Natural killer cell (primary cell): ENCODE measurements at regions of chr7 and their contacts with region 1.

Region 1: DNA sequence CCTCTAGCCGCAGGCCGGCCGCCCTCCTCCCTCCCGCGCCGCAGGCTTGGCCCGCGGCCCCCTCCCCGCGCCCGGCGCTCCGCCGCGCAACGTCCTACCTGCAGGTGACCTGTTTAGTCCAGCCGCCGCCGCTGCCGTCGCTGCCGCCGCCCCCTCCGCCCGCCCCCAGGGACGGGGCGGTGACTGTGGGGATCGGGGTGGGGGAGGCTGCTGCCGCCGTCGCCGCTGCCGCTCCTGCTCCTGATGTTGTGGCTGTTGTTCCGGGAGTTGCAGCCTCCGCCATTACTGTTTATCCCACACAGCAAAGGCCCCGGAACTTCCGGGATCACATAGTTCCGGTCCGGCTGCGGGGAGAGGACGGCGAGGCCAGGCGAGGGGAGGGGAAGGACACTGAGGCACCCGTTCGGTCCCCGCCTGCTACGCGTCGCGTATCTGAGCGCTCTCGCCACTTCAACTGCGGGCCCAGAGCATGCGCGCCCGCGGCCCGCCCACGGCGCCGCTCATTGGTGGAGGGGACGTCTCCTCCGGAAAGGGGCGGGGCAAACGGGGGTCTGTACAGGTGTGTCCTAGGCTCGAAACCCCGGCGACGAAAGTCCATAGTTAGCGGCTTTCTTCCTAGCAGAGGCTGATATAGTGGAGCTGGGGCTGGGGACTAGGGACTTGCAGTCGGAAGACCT is at the start of gene MKRN1:
- DNase-seq: peak; percentile 83 to 95
- ATAC-seq: peak; percentile 84 to 93 (median 91)
- H3K4me3 ChIP-seq: peak within 1 kb of the TSS; percentile 86
- H3K4me3 Mint-ChIP-seq: peak within 1 kb of the TSS; percentile 99
- H3K27ac ChIP-seq: peak within 1 kb of the TSS; percentile 75
- H3K27ac Mint-ChIP-seq: peak within 1 kb of the TSS; percentile 93
- H3K4me1 ChIP-seq: peaks cover 26% of the 10 kb centered on the region
- H3K4me1 Mint-ChIP-seq: peaks cover 30 to 34% of the 10 kb centered on the region in 2 donors
- H3K27me3 ChIP-seq: no peaks in the 10 kb centered on the region
- H3K27me3 Mint-ChIP-seq: no peaks in the 10 kb centered on the region
- CTCF ChIP-seq: no peak
- total RNA-seq, gene MKRN1: 119 to 146 (median 136) TPM

Region 2: GRCh38 chr7:140494867-140495266 is 15.7 kb after region 1 on chr7:
- intact Hi-C with region 1: loop called (anchors 1 kb)
- DNase-seq: no peak
- ATAC-seq: no peak
- H3K4me3 ChIP-seq: no peak overlapping the region
- H3K4me3 Mint-ChIP-seq: no peak overlapping the region
- H3K27ac ChIP-seq: no peak overlapping the region
- H3K27ac Mint-ChIP-seq: no peak overlapping the region
- H3K4me1 ChIP-seq: no peaks in the 10 kb centered on the region
- H3K4me1 Mint-ChIP-seq: no peaks in the 10 kb centered on the region
- H3K27me3 ChIP-seq: no peaks in the 10 kb centered on the region
- H3K27me3 Mint-ChIP-seq: no peaks in the 10 kb centered on the region
- CTCF ChIP-seq: no peak

Region 3: DNA sequence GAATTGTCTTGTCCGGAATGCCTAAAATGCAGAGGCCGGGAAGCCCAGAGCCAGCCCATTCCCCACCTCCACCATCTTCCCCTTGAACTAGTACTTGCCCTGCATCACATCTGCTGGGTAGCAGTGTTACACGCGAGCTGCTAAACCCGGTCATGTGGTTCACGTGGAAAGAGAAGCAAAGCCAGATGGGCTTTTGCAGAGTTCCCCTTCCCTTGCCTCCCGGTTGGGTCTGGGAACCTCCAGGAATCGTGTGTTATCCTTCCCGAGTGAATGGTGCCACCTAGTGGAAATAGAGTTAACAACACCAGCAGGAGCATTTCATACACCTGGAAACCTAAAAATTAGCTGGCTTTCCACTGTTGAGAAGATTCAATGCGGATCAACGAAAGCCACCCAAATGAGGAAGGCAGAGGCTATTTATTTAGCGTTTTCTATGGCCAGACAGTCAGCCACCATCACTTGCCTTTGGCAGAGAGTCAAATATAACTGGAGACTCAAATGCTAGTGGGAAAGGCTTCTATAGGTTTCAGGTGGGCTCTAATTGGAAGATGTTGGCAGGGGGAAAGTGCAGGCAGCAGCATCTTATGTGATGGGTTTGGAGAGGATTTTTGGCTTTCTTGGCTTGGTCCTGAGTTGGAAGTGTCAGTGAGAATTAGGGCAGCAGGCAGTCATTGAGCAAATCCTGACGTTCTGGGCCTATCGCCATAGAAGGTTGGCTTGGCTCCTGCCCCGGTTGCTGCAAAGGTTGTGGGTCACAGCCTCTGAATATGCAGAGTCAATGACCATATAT is 174.3 kb after region 1 on chr7:
- intact Hi-C with region 1: loop called (anchors 1 kb)
- DNase-seq: peak in 1 of 2 donors; percentile 72
- ATAC-seq: peak in 2 of 3 donors; percentile 51 to 54
- H3K4me3 ChIP-seq: no peak overlapping the region
- H3K4me3 Mint-ChIP-seq: no peak overlapping the region
- H3K27ac ChIP-seq: no peak overlapping the region
- H3K27ac Mint-ChIP-seq: no peak overlapping the region
- H3K4me1 ChIP-seq: peaks cover 14% of the 10 kb centered on the region
- H3K4me1 Mint-ChIP-seq: peaks cover 25 to 30% of the 10 kb centered on the region in 2 donors
- H3K27me3 ChIP-seq: no peaks in the 10 kb centered on the region
- H3K27me3 Mint-ChIP-seq: peaks cover 0 to 14% of the 10 kb centered on the region in 2 donors
- CTCF ChIP-seq: peak; percentile 90